ENCODE measurements at regions of chr15 and their contacts with region 1.

Region 1: DNA sequence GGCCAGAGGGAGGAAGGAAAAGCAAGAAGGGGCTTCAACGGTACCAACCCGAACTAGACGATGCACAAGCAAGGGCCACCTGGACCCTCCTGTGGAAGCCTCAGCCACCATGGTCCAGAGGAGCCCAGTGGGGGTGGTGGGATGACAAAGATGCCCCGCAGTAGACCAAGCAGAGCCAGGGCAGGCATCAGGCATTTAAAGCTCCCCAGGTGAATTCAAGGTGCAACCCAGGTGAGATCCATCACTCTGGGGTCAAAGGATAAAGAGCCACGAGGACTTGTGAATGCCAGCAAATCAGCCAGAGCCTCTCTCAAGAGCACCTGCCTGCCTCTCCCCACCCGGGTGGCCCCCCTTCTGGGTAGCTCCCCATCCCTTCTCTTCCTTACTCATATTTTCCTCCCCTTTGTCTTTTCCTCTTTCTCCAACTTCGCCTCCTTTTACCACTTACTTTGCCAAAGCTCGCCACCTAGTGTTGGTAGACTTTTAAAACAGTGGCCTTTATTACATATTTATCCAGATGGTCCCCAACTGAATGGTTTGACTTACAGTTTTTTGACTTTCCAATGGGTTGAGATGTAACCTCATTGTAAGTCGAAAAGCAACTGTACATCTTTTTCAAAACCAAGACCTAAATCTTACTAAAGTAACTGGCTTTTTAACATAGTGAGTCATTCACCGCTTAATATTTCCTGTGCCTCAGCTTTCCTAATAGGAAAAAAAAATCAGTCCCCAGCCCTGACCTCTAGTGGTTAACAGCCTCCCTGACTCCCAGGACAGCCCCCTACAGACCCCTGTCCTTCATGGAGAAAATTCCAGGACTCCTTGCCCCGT is 18.8 kb downstream of the PLA2G4F start:
- DNase-seq: no peak
- H3K4me3 Mint-ChIP-seq: no peak overlapping the region
- H3K27ac Mint-ChIP-seq: no peak overlapping the region
- H3K4me1 Mint-ChIP-seq: peaks cover 10% of the 10 kb centered on the region
- H3K27me3 Mint-ChIP-seq: peaks cover 9% of the 10 kb centered on the region

Region 2: DNA sequence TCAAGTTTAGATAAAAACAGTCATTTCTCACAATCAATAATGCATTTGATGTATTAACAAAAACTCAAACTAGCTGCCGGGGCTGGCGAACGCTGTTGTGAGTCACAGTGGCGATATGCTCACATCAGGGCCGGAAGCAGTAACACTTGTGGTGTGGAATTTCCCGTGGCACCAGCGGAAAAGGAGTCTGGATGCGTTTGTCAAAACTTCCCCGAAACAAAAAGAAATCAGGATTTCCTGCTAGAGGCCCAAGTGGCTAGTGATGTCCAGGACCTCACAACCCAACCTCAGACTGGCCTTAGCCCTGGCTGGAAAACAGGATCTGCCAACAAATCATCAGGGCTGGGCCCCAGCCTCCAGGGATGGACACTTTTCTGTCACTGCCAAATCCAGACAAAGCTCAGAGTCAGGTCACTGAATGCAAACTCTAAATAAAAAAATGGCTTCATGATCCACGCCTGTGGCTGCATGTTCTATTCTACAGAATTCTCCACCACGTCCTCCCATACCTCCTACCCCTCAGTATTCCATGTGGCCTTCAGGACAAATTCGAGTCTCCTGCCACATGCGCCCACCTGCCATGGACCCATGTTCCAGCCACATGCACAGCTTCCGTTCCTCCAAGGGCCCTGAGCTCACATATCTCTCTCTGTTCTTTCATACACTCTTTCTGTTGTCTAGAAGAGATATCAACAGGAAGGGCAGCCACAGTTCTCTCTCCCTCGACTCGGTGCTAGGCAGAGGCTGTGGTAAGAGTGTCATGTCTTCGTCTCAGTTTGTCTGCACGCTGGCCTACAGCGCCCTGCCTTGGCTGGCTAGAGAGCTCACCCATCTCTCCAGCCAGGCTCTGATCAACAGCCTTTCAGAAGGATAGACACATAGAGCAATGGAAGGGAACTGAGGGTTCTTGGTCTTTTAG is 200.7 kb before region 1 on chr15:
- intact Hi-C with region 1: no loop called
- DNase-seq: peak; percentile 78
- H3K4me3 Mint-ChIP-seq: peak overlapping the region; percentile 73
- H3K27ac Mint-ChIP-seq: peak overlapping the region; percentile 100
- H3K4me1 Mint-ChIP-seq: peaks cover 78% of the 10 kb centered on the region
- H3K27me3 Mint-ChIP-seq: no peaks in the 10 kb centered on the region

Region 3: GRCh38 chr15:41989259-41989933 is 148.2 kb before region 1 on chr15:
- intact Hi-C with region 1: loop called (anchors 1 kb)
- DNase-seq: peak; percentile 72
- H3K4me3 Mint-ChIP-seq: no peak overlapping the region
- H3K27ac Mint-ChIP-seq: no peak overlapping the region
- H3K4me1 Mint-ChIP-seq: peaks cover 5% of the 10 kb centered on the region
- H3K27me3 Mint-ChIP-seq: no peaks in the 10 kb centered on the region

Region 4: GRCh38 chr15:42059661-42060476 is 77.8 kb before region 1 on chr15:
- intact Hi-C with region 1: loop called (anchors 2 kb)
- DNase-seq: peak; percentile 52
- H3K4me3 Mint-ChIP-seq: no peak overlapping the region
- H3K27ac Mint-ChIP-seq: no peak overlapping the region
- H3K4me1 Mint-ChIP-seq: peaks cover 10% of the 10 kb centered on the region
- H3K27me3 Mint-ChIP-seq: peaks cover 25% of the 10 kb centered on the region

Region 5: GRCh38 chr15:42066764-42067415 is 70.8 kb before region 1 on chr15:
- intact Hi-C with region 1: loop called (anchors 1 kb)
- DNase-seq: no peak
- H3K4me3 Mint-ChIP-seq: no peak overlapping the region
- H3K27ac Mint-ChIP-seq: no peak overlapping the region
- H3K4me1 Mint-ChIP-seq: no peaks in the 10 kb centered on the region
- H3K27me3 Mint-ChIP-seq: peaks cover 10% of the 10 kb centered on the region

Region 6: GRCh38 chr15:42084460-42085235 is 53.0 kb before region 1 on chr15:
- intact Hi-C with region 1: loop called (anchors 5 kb)
- DNase-seq: no peak
- H3K4me3 Mint-ChIP-seq: no peak overlapping the region
- H3K27ac Mint-ChIP-seq: no peak overlapping the region
- H3K4me1 Mint-ChIP-seq: peaks cover 6% of the 10 kb centered on the region
- H3K27me3 Mint-ChIP-seq: peaks cover 6% of the 10 kb centered on the region

Measured in activated T-helper 1 cell treated with anti-CD3 and anti-CD28 coated beads, Interleukin-12 subunit alpha, Interleukin-12 subunit beta, Interleukin-2, Interleukin-4 antibody, amounts not matched to agents 30 ng/mL and 10 ng/mL and 1 ng/mL, durations not matched to agents 14 hours and 24 hours and 36 hours (primary cell).